Right ventricle myocardium inferior (tissue), 1 donor: ENCODE measurements at regions of chr16 and their contacts with region 1.

Region 1: GRCh38 chr16:8660841-8661301 is 13.5 kb upstream of the ABAT start:
- DNase-seq: peak; percentile 67
- ATAC-seq: peak; percentile 88

Region 2: GRCh38 chr16:8797364-8798173 is 136.7 kb after region 1 on chr16 and contains the starts of genes PMM2 and TMEM186:
- intact Hi-C with region 1: loop called (anchors 1 kb)
- DNase-seq: peak; percentile 99
- ATAC-seq: peak; percentile 100
- total RNA-seq, gene PMM2: 15.9 TPM
- total RNA-seq, gene TMEM186: 13.8 TPM

Region 3: GRCh38 chr16:8880839-8881510 is 220.1 kb after region 1 on chr16:
- intact Hi-C with region 1: loop called (anchors 2 kb)
- DNase-seq: no peak
- ATAC-seq: no peak

Region 4: DNA sequence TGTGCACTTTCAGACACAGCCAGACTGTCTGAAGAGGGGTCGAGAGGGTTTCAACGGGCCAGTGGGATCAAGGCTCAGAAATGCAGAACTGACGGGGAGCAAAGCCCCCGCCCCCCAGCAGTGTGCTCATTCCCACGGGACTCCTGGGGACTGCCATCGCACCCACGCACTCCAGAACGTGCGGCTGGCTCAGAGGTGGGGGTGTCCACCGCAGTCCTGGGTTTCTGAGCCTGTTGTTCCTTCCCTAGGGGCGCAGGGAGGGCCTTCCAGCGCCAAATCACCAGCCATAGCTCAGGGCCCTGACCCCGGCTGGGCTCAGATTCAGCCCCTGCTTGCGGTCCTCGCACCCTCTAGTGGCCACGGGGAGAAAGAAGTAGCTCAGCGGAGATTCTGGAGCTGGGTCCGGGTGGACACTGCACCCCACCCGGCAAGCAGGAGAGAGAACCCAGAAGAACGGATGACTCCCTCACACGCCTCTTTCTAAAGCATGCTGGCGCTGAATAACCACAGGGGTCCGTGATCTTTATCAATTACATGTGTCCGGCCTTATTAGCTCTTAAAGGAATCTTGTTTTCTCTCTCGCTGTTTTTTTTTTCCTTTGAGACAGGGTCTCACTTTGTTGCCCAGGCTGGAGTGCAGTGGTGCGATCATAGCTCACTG is 347.9 kb after region 1 on chr16:
- intact Hi-C with region 1: loop called (anchors 10 kb)
- DNase-seq: peak; percentile 88
- ATAC-seq: peak; percentile 91